Vagina (tissue), 2 donors: ENCODE measurements at regions of chr6 and their contacts with region 1.

Region 1: GRCh38 chr6:96186521-96187222 is 170.9 kb downstream of the FUT9 start:
- DNase-seq: no peak
- H3K4me3 ChIP-seq: no peak overlapping the region
- H3K27ac ChIP-seq: no peak overlapping the region
- H3K4me1 ChIP-seq: no peaks in the 10 kb centered on the region
- H3K27me3 ChIP-seq: no peaks in the 10 kb centered on the region
- CTCF ChIP-seq: no peak
- POLR2A ChIP-seq: no peak

Region 2: DNA sequence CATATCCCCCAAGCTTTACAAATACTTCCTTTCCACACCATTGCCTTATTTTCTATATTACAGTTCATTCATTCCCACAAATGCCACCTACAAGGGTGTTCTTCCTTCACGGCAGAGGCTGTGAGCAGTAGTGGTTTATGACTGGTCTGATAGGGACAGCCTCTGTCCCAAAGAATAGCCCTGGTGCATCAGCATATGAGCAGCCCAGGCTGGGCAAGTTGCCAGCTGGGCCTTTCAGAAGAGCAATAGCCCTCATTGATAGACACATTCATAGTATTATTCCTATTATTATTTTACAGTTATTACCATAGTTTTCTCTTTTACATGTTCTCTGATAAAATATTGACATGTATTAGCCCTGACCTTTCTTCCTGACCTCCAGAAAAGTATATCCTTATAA is 946.4 kb after region 1 on chr6:
- intact Hi-C with region 1: no loop called
- DNase-seq: no peak
- H3K4me3 ChIP-seq: no peak overlapping the region
- H3K27ac ChIP-seq: no peak overlapping the region
- H3K4me1 ChIP-seq: no peaks in the 10 kb centered on the region
- H3K27me3 ChIP-seq: no peaks in the 10 kb centered on the region
- CTCF ChIP-seq: no peak
- POLR2A ChIP-seq: no peak

Region 3: DNA sequence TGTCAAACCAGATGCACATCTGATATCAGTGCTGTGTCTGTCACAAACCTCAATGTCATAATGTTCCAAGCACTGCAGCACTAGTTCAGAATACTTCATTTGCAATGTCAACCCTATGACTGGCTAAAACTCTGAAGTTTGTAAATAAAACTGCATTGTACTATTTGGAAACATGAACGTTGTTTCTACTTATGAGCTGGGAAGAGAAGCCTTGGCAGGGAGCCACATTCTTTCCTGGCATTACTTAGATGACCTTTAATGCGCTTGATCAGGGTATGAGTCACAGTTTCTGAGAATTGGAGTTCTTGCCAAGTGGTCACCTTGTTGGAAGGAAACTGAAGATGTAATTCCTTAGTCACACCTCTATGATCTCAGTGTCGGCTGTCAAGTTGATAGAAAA is 1761.2 kb after region 1 on chr6:
- intact Hi-C with region 1: loop called (anchors 5 kb)
- DNase-seq: no peak
- H3K4me3 ChIP-seq: no peak overlapping the region
- H3K27ac ChIP-seq: no peak overlapping the region
- H3K4me1 ChIP-seq: no peaks in the 10 kb centered on the region
- H3K27me3 ChIP-seq: no peaks in the 10 kb centered on the region
- CTCF ChIP-seq: no peak
- POLR2A ChIP-seq: no peak

Region 4: GRCh38 chr6:97978855-97979271 is 1792.2 kb after region 1 on chr6:
- intact Hi-C with region 1: no loop called
- DNase-seq: no peak
- H3K4me3 ChIP-seq: no peak overlapping the region
- H3K27ac ChIP-seq: no peak overlapping the region
- H3K4me1 ChIP-seq: no peaks in the 10 kb centered on the region
- H3K27me3 ChIP-seq: no peaks in the 10 kb centered on the region
- CTCF ChIP-seq: no peak
- POLR2A ChIP-seq: no peak